Calu3 (cell line): ENCODE measurements at regions of chr18 and their contacts with region 1.

Region 1: DNA sequence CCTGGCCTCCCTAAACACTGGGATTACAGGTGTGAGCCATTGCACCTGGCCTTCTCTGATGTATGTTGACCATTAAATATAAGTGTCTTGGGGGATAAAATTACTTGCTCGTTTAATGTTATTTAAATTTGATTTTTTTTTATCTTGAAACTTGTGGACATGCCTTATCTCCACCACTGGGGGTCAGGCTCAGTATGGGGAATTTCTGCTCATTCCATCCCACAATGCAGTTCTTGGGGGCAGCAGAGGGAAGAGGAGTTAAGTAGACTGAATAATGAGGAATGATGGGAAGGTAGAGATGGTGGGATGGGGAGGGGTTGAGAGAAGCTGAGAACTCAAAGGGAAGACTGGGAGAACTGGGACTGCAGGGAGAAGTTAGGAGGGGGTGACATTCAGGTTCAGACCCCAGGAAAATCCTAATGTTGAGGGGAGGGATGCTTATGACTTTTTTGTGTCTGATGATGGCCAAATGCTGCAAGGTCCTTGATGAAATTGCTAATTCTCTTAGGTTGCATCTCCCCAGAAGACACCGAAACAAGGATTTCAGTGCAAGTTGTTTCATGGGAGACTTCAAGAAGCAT is 174.2 kb downstream of the MIB1 start:
- DNase-seq: peak; percentile 66
- H3K4me3 Mint-ChIP-seq: no peak overlapping the region
- H3K27ac Mint-ChIP-seq: no peak overlapping the region
- H3K4me1 Mint-ChIP-seq: no peaks in the 10 kb centered on the region
- H3K27me3 Mint-ChIP-seq: no peaks in the 10 kb centered on the region
- CTCF ChIP-seq: peak; percentile 81

Region 2: DNA sequence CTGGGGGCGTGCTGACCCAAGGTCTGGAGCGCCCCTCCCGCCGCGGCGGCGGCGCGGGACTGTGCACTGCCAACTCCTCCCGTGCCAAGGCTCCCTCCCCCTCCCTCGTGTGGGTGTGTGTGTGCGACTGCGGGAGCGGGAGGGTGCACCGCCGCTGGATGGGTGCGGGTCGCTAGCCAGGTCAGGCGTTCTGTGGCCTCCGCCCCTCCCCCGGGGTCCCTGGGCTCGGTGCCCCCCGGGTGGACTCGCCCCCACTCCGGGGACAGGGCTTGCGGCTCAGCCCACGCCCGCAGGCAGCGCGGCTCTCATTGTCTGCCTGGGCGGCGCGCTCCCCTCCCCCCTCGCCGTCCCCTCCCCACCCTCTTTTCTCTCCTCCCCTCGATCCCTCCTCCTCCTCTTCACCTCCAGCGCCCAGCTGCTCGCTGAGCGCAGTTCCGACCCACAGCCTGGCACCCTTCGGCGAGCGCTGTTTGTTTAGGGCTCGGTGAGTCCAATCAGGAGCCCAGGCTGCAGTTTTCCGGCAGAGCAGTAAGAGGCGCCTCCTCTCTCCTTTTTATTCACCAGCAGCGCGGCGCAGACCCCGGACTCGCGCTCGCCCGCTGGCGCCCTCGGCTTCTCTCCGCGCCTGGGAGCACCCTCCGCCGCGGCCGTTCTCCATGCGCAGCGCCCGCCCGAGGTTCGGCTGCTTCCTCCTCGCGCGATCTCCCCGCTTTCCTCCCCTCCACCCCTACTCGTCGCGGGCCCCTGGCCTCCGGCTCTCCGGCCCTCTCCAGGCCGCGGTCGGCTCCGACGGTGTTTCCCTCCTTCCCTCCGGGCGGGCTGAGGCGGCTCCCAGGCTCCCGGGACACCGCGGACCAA is 254.4 kb after region 1 on chr18 and contains the start of gene GATA6:
- CTCF ChIA-PET with region 1: no interaction called
- intact Hi-C with region 1: loop called (anchors 5 kb)
- DNase-seq: peak; percentile 94
- H3K4me3 Mint-ChIP-seq: peak within 1 kb of the TSS; percentile 98
- H3K27ac Mint-ChIP-seq: peak within 1 kb of the TSS; percentile 94
- H3K4me1 Mint-ChIP-seq: peaks cover 8% of the 10 kb centered on the region
- H3K27me3 Mint-ChIP-seq: peaks cover 23% of the 10 kb centered on the region
- CTCF ChIP-seq: no peak
- total RNA-seq, gene GATA6: 54.6 and 58.4 TPM in 2 replicates

Region 3: GRCh38 chr18:22378672-22379282 is 463.9 kb after region 1 on chr18:
- CTCF ChIA-PET with region 1: no interaction called
- intact Hi-C with region 1: loop called (anchors 10 kb)
- DNase-seq: peak; percentile 63
- H3K4me3 Mint-ChIP-seq: no peak overlapping the region
- H3K27ac Mint-ChIP-seq: no peak overlapping the region
- H3K4me1 Mint-ChIP-seq: peaks cover 12% of the 10 kb centered on the region
- H3K27me3 Mint-ChIP-seq: no peaks in the 10 kb centered on the region
- CTCF ChIP-seq: peak; percentile 65

Region 4: DNA sequence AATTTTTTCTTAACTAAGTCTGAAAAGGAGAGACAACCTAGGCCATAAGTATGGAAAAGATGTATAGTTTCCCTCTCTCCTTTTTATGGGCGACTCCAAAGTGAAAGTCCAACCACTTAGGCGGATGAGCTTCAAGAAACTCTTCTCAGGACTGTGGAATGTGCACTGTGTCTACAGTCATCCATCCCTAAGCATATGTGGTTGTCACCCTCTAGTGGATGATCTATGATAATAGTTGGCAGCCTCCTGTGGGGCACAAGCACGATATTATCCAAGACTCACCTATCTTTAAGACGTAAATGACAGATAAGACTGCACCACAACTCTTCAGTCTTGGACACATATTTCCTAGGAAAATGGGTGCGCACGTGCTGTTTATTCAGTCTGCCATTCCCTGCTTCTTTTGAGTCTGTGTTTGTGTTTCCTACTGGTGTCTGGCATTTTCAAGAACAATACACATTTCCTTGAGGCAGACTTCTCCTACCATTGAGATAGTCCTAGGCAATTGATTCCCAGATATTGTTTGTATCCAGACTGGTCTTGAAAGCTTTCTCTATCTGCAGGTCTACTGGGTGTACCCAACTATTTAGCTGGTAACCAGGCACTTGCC is 648.4 kb after region 1 on chr18:
- CTCF ChIA-PET with region 1: no interaction called
- intact Hi-C with region 1: loop called (anchors 2 kb)
- DNase-seq: peak; percentile 65
- H3K4me3 Mint-ChIP-seq: no peak overlapping the region
- H3K27ac Mint-ChIP-seq: peak overlapping the region; percentile 75
- H3K4me1 Mint-ChIP-seq: peaks cover 46% of the 10 kb centered on the region
- H3K27me3 Mint-ChIP-seq: no peaks in the 10 kb centered on the region
- CTCF ChIP-seq: peak; percentile 52